ENCODE measurements at regions of chr6 and their contacts with region 1.

Region 1: DNA sequence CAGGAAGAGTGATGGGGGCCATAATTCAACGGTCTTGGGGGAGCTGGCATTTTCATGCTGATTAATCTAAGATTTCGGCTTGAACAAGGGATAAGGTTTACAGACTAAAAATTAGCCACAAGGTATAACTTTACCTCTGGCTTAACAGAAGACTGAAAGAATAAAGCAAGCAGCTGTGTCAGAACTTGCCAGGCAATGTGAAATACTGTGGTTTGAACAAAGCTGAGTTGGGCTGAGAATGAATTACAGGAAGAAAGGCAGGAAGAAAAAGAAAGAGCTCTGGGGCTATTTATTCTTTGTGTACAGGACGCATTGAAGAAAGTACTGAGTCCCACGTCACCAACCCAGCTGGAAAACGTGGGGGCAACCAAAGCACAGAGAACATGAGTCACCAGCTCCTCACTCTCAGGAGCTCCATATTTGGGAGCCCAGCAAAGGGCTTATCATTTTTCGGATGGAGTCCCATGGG is 121.5 kb upstream of the NEDD9 start:
- DNase-seq: peak; percentile 52
- ATAC-seq: peak; percentile 89
- H3K4me3 Mint-ChIP-seq: peak overlapping the region; percentile 51
- H3K27ac Mint-ChIP-seq: peak overlapping the region; percentile 89
- H3K4me1 Mint-ChIP-seq: peaks cover 57% of the 10 kb centered on the region
- H3K27me3 Mint-ChIP-seq: no peaks in the 10 kb centered on the region

Region 2: DNA sequence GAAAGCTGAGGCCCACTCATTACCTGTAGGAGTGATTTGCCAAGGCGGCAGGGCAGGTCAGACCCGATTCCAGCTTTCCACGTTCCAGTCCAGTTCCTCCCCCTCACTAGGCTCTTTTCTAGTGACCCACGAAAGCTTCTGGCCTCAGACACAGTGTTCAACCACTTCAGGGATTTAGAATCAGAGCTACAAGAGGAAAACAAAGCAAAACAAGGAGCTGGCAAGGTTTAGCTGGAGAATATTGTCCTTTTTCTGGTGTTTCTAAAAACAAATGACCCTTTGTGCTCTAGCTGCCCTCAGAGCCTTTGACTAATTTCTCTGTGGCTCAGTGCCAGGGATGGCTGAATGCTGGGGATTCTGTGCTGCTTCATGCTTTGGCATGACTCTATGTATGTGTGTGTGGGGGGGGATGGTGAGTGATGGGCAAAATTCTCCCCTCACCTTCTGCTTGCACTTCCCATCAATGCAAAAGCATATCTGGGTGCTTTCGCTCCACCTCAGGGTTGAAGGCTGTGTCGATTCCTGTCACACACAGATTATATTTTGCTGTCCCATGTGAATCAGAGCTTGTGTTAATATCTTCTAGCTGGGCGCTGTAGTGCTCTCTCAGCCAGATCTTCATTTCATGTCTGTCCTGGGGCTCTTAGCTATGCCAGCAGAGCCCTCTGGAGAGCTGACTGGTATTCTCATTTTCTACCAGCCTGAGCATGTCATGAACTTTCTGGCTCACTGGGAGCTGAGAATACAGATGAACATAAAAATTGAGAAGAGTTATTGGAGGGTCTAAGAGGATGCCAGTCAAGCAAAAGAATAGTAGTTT is 102.2 kb before region 1 on chr6:
- POLR2A ChIA-PET with region 1: no interaction called
- DNase-seq: no peak
- ATAC-seq: no peak
- H3K4me3 Mint-ChIP-seq: no peak overlapping the region
- H3K27ac Mint-ChIP-seq: no peak overlapping the region
- H3K4me1 Mint-ChIP-seq: peaks cover 17% of the 10 kb centered on the region
- H3K27me3 Mint-ChIP-seq: no peaks in the 10 kb centered on the region

Region 3: DNA sequence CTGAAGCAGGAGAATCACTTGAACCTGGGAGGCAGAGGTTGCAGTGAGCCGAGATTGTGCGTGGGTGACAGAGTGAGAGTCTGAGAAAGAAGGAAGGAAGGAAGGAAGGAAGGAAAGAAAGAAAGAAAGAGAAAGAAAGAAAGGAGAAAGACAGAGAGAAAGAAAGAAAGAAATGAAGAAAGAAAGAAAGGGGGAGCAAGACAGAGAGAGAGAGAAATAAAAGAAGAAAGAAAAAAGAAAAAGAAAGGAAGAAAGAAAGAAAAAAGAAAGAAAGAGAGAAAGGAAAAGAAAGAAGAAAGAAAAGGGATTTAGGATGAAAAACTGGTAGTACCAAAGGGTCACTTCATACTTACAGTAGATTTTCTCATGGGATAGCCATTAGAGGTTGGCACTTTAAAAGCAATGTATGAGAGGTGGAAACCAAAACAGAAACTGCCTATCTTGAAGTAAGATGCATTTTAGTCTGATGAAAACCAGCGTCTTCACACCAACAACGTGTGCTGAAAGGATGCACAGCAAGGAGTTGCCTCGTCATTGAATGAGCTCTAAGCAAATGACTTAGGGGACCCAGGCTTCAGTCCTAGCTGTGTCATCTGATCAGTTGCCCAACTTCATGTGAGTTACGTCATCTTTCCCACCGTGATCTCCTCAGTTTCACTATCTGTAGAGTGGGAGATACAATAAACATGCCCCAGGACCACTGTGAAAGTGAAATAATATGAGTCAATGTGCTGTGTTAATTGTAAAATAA is 12.4 kb after region 1 on chr6:
- POLR2A ChIA-PET with region 1: interaction called, 13 read pairs
- DNase-seq: no peak
- ATAC-seq: peak; percentile 77
- H3K4me3 Mint-ChIP-seq: peak overlapping the region; percentile 44
- H3K27ac Mint-ChIP-seq: peak overlapping the region; percentile 83
- H3K4me1 Mint-ChIP-seq: peaks cover 61% of the 10 kb centered on the region
- H3K27me3 Mint-ChIP-seq: no peaks in the 10 kb centered on the region